ENCODE measurements at regions of chr14 and their contacts with region 1.

Region 1: GRCh38 chr14:70576891-70577290 is 23.6 kb downstream of the MED6 start:
- DNase-seq: no peak
- H3K4me3 ChIP-seq: no peak overlapping the region
- H3K27ac ChIP-seq: no peak overlapping the region
- H3K4me1 ChIP-seq: no peaks in the 10 kb centered on the region
- H3K27me3 ChIP-seq: no peaks in the 10 kb centered on the region
- CTCF ChIP-seq: no peak
- POLR2A ChIP-seq: no peak

Region 2: DNA sequence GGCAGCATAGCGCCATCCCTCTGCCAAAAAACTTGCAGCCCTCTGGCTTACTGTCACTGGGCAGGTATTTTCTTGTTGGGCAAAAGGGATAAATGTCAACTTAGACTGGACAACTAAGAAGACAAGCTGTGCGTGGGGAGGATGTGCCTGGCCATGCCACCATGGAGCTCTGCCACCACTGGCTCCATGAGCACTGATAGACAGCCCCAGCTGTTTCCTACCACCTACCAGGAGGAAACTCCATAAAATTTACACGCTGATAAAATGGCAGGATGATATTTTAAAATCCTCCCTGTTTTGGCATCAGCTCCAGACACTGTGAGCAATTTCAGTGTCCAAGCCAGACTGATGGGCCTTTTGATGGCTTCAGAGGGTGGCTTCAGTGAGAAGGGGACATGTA is 1324.0 kb before region 1 on chr14:
- intact Hi-C with region 1: loop called (anchors 5 kb)
- DNase-seq: no peak
- H3K4me3 ChIP-seq: no peak overlapping the region
- H3K27ac ChIP-seq: no peak overlapping the region
- H3K4me1 ChIP-seq: no peaks in the 10 kb centered on the region
- H3K27me3 ChIP-seq: no peaks in the 10 kb centered on the region
- CTCF ChIP-seq: no peak
- POLR2A ChIP-seq: no peak

Region 3: GRCh38 chr14:69972755-69973154 is 604.1 kb before region 1 on chr14:
- intact Hi-C with region 1: no loop called
- DNase-seq: no peak
- H3K4me3 ChIP-seq: no peak overlapping the region
- H3K27ac ChIP-seq: no peak overlapping the region
- H3K4me1 ChIP-seq: no peaks in the 10 kb centered on the region
- H3K27me3 ChIP-seq: no peaks in the 10 kb centered on the region
- CTCF ChIP-seq: no peak
- POLR2A ChIP-seq: no peak

Region 4: DNA sequence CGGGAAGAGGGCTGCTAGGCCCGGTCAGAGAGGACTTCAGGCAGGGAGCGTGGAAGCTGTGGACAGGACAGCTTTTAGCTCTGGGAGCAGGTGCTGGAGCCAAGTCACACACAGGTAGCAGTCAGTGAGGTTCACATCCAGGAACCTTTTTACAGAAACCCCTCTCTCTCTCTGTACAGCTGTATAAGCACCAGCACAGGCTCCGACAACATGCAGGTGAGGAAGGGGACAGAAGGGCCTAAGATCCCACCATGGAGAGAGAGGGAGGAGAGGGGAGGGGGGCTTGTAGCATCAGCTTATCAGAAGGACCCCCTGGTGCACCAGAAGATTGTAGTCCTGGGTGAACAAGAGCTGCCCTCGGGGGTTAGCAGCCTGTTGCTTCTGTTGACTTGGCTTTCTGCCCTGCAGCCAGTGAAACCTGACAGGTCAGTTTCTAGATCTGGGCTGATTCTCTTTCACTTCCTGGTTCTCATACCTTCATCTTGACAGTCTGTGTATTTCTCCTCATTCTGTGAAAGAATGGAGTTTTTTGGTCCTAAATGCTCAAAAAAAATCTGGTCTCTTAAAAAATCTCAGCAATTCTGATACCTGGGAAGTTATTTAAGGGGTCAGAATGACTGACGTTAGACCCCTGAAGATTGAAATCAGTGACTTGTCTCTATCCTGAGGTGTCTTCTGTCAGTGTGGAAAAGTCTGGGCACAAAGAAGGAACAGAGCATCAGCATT is 88.5 kb after region 1 on chr14:
- intact Hi-C with region 1: no loop called
- DNase-seq: no peak
- H3K4me3 ChIP-seq: no peak overlapping the region
- H3K27ac ChIP-seq: no peak overlapping the region
- H3K4me1 ChIP-seq: peaks cover 16% of the 10 kb centered on the region
- H3K27me3 ChIP-seq: no peaks in the 10 kb centered on the region
- CTCF ChIP-seq: no peak
- POLR2A ChIP-seq: no peak

Measured in vagina (tissue), 2 donors.